ENCODE measurements at regions of chr14 and their contacts with region 1.

Region 1: DNA sequence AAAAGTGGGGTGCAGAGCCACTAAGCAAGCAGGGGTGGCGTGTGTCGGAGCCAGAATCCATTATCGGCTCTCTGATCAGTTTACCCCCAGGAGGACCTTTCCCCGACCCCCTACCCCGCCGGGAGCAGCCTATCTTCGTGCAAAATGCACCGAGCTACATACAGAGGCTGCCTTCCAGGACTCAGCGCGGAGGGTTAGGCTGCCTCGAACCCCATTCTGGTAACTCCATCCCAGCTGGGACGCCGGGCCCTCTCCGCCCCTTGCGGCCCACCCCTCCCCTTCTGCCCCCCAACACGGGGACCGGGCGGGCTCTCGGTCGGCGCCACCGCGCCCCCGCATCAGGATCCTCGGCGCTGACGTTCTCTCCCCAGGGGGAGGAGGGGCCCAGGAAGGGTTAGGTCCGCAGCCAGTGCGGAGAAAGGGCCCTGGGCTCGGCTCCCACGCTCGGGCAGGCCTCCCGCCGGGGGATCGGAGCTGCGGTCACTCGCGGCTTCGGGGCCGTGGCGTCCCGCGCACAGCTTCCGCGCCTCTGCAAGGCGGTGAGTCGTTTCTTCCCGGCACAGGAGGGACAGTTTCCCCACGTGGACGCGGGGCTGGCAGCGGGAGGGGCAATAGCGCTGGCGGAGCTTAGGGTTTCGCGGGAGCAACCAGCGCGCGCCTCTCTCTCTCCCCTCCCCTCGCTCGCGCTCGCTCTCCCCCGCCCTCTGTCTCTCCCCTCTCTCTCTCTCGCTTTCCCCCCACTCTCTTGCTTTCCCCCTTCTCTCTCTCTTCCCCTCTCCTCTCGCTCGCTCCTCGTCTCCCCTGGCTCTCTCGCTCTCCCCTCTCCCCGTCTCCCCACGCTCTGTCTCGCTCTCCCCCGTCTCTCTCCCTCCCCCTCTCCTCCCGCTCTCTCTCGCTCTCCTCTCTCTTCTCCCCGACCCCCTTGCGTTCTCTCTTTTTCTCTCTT is 12.5 kb upstream of the MAP3K9 start:
- DNase-seq: no peak
- ATAC-seq: peak; percentile 70
- H3K4me3 ChIP-seq: peak overlapping the region; percentile 53 to 59
- H3K27ac ChIP-seq: no peak overlapping the region
- H3K4me1 ChIP-seq: peaks cover 7% of the 10 kb centered on the region
- H3K27me3 ChIP-seq: peaks cover 4% of the 10 kb centered on the region; the same call in 1 of the 2 replicates
- CTCF ChIP-seq: no peak

Region 2: DNA sequence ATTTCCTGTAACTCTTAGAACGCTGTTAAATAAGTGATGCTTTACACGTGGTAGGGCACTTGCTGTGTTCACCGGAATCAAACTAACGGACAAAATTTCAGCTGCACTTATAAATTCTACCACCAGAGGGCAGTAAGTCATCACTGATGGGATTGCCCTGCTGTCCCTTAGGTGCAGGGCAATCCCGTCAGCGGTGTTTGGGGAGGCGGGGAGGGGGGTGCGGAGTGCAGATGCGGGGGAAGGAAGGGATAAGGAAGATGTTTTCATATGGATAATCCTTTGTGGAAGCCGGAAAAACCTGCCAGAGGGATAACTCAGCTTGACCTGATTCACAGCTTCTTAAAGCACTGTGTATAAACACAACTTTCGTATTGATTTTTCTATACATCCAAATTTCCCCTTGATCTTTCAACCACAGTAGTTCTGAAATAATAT is 1003.1 kb before region 1 on chr14:
- CTCF ChIA-PET with region 1: interaction called, 14 read pairs
- POLR2A ChIA-PET with region 1: no interaction called
- in situ Hi-C with region 1: no loop called
- intact Hi-C with region 1: no loop called
- DNase-seq: peak; percentile 70
- ATAC-seq: peak; percentile 92
- H3K4me3 ChIP-seq: no peak overlapping the region
- H3K27ac ChIP-seq: no peak overlapping the region
- H3K4me1 ChIP-seq: no peaks in the 10 kb centered on the region
- H3K27me3 ChIP-seq: no peaks in the 10 kb centered on the region
- CTCF ChIP-seq: peak; percentile 81

Region 3: DNA sequence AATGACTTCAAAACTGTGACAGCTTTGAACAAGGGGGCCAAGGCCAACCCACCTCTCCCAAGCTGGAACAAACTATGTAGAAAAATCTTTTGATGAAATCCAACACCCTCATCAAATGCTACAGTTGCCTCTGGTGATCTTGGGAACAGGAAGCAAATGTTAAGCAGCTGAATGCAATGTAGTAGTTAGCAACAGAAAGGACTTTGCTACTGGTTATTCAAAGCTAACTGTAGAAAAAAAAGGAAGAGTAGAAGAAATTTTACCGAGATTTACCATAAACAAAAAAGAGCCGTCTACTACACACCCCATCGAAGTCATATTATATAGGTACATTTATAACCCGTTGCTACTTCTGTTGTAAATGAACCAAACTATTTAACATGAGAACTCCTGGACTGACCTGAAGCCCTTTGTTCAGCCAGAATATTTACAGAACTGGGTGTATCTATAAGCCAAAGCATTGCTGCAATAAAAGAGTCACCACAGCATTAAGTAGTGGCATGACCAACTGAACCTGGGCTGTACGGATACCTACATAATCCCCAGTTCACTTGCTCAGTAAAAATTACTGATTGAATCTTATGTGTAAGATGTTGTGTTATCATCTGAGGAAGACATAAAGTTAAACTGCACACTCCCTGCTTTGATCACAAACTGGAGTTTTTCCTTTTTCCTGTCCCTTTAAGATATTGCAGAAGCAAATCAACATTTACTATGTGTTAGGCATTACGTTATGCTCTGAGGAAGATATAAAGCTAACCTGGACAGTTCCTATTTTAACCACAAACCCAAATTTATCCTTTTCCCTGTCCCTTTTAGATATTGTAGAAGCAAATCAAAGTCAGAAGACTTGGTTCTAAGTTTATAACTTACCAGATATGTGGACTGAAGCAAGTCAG is 430.1 kb before region 1 on chr14:
- CTCF ChIA-PET with region 1: no interaction called
- POLR2A ChIA-PET with region 1: no interaction called
- in situ Hi-C with region 1: no loop called
- intact Hi-C with region 1: no loop called
- DNase-seq: no peak
- ATAC-seq: no peak
- H3K4me3 ChIP-seq: no peak overlapping the region
- H3K27ac ChIP-seq: no peak overlapping the region
- H3K4me1 ChIP-seq: no peaks in the 10 kb centered on the region
- H3K27me3 ChIP-seq: no peaks in the 10 kb centered on the region
- CTCF ChIP-seq: no peak

Region 4: DNA sequence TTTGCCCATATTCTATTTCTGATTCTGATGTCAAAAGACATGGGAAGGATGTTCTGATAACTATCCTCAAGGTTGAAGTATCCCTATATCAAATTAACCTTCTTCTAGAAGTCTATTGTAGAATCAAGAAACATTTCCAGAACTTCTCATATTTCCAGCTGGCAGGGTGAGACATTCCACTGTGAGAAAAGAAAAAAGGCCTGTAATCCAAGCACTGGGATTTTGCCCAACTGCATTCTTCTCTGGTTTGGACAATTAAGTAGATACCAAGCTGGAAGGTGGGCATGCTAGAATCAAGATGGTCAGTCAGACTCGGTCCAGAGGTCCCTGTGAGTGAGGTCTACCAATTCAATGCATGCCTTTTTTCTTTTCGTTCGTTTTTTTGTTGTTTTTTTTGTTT is 73.4 kb before region 1 on chr14:
- CTCF ChIA-PET with region 1: interaction called, 10 read pairs
- POLR2A ChIA-PET with region 1: no interaction called
- in situ Hi-C with region 1: no loop called
- intact Hi-C with region 1: no loop called
- DNase-seq: no peak
- ATAC-seq: no peak
- H3K4me3 ChIP-seq: no peak overlapping the region
- H3K27ac ChIP-seq: no peak overlapping the region
- H3K4me1 ChIP-seq: no peaks in the 10 kb centered on the region
- H3K27me3 ChIP-seq: no peaks in the 10 kb centered on the region
- CTCF ChIP-seq: no peak

Region 5: GRCh38 chr14:70803321-70804310 is 18.2 kb before region 1 on chr14:
- CTCF ChIA-PET with region 1: no interaction called
- POLR2A ChIA-PET with region 1: no interaction called
- in situ Hi-C with region 1: no loop called
- intact Hi-C with region 1: no loop called
- DNase-seq: no peak
- ATAC-seq: no peak
- H3K4me3 ChIP-seq: no peak overlapping the region
- H3K27ac ChIP-seq: no peak overlapping the region
- H3K4me1 ChIP-seq: peaks cover 5% of the 10 kb centered on the region; the same call in 1 of the 2 replicates
- H3K27me3 ChIP-seq: no peaks in the 10 kb centered on the region
- CTCF ChIP-seq: no peak

Region 6: GRCh38 chr14:70972107-70972976 is 150.5 kb after region 1 on chr14:
- CTCF ChIA-PET with region 1: interaction called, 5 read pairs
- POLR2A ChIA-PET with region 1: no interaction called
- in situ Hi-C with region 1: no loop called
- intact Hi-C with region 1: loop called (anchors 5 kb)
- DNase-seq: peak; percentile 62
- ATAC-seq: peak; percentile 89
- H3K4me3 ChIP-seq: no peak overlapping the region
- H3K27ac ChIP-seq: no peak overlapping the region
- H3K4me1 ChIP-seq: no peaks in the 10 kb centered on the region
- H3K27me3 ChIP-seq: no peaks in the 10 kb centered on the region
- CTCF ChIP-seq: peak; percentile 81

Region 7: DNA sequence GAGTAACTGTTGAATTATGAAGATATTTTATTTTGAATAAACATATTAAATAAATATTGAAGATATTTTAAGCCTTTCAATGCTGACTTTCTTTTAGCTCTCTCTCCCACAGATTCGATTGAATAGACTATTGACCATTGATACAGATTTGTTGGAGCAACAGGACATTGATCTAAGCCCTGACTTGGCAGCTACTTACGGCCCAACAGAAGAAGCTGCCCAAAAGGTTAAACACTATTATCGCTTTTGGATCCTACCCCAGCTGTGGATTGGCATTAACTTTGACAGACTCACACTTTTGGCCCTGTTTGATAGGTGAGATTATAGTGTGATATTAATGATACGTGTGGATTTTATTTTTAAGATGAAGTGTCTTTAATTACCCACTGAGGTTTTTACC is 191.0 kb after region 1 on chr14:
- CTCF ChIA-PET with region 1: no interaction called
- POLR2A ChIA-PET with region 1: interaction called, 10 read pairs
- in situ Hi-C with region 1: no loop called
- intact Hi-C with region 1: no loop called
- DNase-seq: no peak
- ATAC-seq: no peak
- H3K4me3 ChIP-seq: no peak overlapping the region
- H3K27ac ChIP-seq: no peak overlapping the region
- H3K4me1 ChIP-seq: no peaks in the 10 kb centered on the region
- H3K27me3 ChIP-seq: no peaks in the 10 kb centered on the region
- CTCF ChIP-seq: no peak

Region 8: DNA sequence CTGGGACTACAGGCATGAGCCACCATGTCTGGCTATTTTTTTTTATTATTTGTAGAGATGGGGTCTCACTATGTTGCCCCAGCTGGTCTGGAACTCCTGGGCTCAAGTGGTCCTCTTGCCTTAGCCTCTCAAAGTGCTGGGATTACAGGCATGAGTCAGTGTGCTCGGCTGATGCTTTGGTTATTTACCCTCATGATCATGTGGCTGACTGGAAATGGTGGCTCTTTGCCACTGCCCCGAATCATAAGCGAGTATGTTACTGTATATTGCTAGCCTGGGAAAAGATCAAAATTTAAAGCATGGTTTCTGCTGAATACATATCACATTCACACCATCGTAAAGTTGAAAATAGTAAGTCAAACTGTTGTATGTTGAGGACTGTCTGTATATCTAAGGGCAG is 1211.5 kb after region 1 on chr14:
- CTCF ChIA-PET with region 1: interaction called, 16 read pairs
- POLR2A ChIA-PET with region 1: no interaction called
- in situ Hi-C with region 1: no loop called
- intact Hi-C with region 1: no loop called
- DNase-seq: no peak
- ATAC-seq: no peak
- H3K4me3 ChIP-seq: no peak overlapping the region
- H3K27ac ChIP-seq: no peak overlapping the region
- H3K4me1 ChIP-seq: no peaks in the 10 kb centered on the region
- H3K27me3 ChIP-seq: no peaks in the 10 kb centered on the region
- CTCF ChIP-seq: no peak

Measured in Panc1 (cell line).